ENCODE measurements at regions of chr7 and their contacts with region 1.

Region 1: GRCh38 chr7:139777948-139778841 is at the start of gene HIPK2:
- DNase-seq: peak; percentile 74
- H3K4me3 ChIP-seq: peak within 1 kb of the TSS; percentile 74 to 90
- H3K27ac ChIP-seq: peak within 1 kb of the TSS; percentile 95 to 97
- H3K4me1 ChIP-seq: no peaks in the 10 kb centered on the region
- H3K27me3 ChIP-seq: no peaks in the 10 kb centered on the region
- CTCF ChIP-seq: no peak
- POLR2A ChIP-seq: peak; percentile 18
- total RNA-seq, gene HIPK2: 54.4 to 72.7 TPM

Region 2: GRCh38 chr7:139505563-139505962 is 272.6 kb before region 1 on chr7:
- intact Hi-C with region 1: loop called (anchors 5 kb)
- DNase-seq: no peak
- H3K4me3 ChIP-seq: no peak overlapping the region
- H3K27ac ChIP-seq: no peak overlapping the region
- H3K4me1 ChIP-seq: no peaks in the 10 kb centered on the region
- H3K27me3 ChIP-seq: no peaks in the 10 kb centered on the region
- CTCF ChIP-seq: no peak
- POLR2A ChIP-seq: no peak

Region 3: DNA sequence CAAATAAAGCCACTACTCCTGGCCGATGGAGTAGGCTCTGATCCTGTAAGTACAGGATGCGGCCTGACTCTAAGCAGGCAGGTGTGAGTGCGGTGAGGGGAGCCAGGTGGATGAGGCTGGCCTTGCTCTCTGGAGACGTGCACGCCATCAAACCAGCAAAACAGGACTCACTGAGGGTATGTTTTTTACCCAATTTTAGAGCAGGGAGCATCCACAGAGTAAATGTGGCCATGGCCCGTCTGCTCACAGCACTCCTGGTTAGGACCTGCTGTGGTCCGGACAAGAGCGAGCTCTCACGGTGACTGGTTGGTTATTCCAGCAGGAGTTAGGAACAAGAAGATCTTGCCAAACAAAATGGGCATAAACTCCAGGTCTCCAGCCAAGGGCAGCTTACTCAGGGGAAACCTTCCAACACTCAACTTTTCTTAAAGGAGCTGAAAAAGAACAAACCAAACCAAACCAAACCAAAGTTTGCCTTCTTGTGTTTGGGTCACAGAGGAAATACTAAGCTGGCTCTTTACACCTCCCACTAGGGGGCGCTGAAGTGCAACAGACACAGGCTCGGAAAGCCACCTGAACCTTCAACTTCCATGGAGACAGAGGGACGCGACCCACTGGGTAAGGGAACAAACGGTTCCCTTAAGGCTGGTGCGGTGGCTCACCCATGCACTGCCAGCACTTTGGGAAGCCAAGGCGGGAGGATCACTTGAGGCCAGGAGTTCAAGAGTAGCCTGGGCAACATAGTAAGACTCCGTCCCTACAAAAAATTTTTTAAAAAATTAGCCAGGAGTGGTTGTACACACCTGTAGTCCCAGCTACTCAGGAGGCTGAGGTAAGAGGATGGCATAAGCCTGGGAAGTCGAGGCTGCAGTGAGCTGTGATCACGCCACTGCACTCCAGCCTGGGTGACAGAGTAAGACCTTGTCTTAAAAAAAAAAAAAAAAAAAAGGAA is 132.3 kb before region 1 on chr7:
- intact Hi-C with region 1: loop called (anchors 2 kb)
- DNase-seq: peak; percentile 85
- H3K4me3 ChIP-seq: no peak overlapping the region
- H3K27ac ChIP-seq: peak overlapping the region in 1 of 2 donors; percentile 27
- H3K4me1 ChIP-seq: peaks cover 4% of the 10 kb centered on the region
- H3K27me3 ChIP-seq: no peaks in the 10 kb centered on the region
- CTCF ChIP-seq: peak; percentile 91 to 94 (median 93)
- POLR2A ChIP-seq: no peak

Region 4: GRCh38 chr7:139854124-139854511 is 75.9 kb after region 1 on chr7:
- intact Hi-C with region 1: loop called (anchors 5 kb)
- DNase-seq: no peak
- H3K4me3 ChIP-seq: no peak overlapping the region
- H3K27ac ChIP-seq: peak overlapping the region; percentile 70 to 84
- H3K4me1 ChIP-seq: no peaks in the 10 kb centered on the region
- H3K27me3 ChIP-seq: no peaks in the 10 kb centered on the region
- CTCF ChIP-seq: no peak
- POLR2A ChIP-seq: no peak

Region 5: DNA sequence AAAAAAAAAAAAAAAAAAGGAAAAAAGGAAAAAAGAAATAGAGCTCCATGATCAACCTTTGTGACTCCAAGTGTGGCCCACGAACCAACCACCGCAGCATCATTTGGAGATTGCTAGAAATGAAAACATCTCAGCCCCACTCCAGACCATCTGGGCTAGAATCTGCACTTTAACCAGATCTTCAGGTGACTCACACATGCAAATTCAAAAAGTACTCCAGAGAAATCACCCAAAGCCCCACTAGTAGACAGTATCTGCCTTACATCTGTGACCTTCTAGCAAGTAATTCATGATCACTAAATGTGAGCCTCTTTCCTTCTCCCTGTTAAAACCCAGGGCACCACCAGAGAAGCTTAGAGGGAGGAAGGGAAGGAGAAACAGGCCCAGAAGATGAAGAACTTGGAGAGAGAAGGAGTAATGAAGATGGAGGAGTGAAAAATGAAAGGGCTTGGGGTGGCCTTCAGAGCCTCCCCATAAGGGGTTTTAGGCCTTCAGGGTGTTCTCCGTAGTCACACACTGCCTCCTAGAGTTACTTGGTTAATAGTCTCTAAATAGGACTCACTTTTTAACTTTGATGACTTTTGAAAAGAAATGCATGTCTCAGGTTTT is 526.1 kb after region 1 on chr7:
- intact Hi-C with region 1: no loop called
- DNase-seq: no peak
- H3K4me3 ChIP-seq: no peak overlapping the region
- H3K27ac ChIP-seq: no peak overlapping the region
- H3K4me1 ChIP-seq: no peaks in the 10 kb centered on the region
- H3K27me3 ChIP-seq: no peaks in the 10 kb centered on the region
- CTCF ChIP-seq: no peak
- POLR2A ChIP-seq: no peak

Measured in prostate gland (tissue), 2 donors.